ENCODE measurements at regions of chr20 and their contacts with region 1.

Region 1: DNA sequence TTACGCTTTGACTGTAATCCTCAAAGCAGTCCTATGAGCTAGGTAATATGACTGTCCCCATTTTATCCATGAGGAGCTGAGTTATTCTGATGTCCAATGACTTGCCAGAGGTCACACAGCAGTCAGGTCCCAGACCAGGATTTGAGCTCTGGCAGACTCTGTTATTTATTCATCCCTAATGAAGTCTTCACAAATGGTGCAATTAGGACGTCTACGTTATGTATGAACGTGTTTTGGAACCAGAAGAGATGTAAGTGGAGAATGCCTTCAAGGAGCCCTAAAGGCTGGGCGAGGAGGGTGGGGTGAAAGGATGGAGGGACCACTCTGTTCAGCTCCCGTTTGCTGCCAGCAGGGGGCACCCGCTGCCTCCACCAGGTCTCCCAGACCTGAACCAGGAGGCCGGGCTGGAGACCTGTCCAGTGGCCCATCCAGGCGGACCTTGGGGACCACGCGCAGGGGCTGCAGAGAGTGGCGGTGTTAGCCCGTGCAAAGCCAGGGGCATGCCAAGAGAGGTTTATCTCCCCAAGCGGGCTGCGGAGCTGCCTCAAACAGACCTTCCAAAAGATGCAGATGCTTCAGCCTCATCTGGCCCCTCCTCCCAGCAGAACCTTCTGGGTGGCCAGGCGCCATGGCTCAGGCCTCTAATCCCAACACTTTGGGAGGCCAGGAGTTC is 15.2 kb upstream of the ZNF335 start:
- DNase-seq: peak; percentile 35 to 85 (median 70)
- ATAC-seq: peak; percentile 91 to 99 (median 94)
- H3K4me3 ChIP-seq: no peak overlapping the region
- H3K4me3 Mint-ChIP-seq: no peak overlapping the region
- H3K27ac ChIP-seq: no peak overlapping the region
- H3K27ac Mint-ChIP-seq: no peak overlapping the region
- H3K4me1 ChIP-seq: peaks cover 0 to 6% of the 10 kb centered on the region in 2 experiments
- H3K4me1 Mint-ChIP-seq: peaks cover 0 to 4% (median 0%) of the 10 kb centered on the region in 3 donors
- H3K27me3 ChIP-seq: peaks cover 0 to 34% of the 10 kb centered on the region in 2 experiments
- H3K27me3 Mint-ChIP-seq: peaks cover 0 to 6% of the 10 kb centered on the region in 2 donors

Region 2: DNA sequence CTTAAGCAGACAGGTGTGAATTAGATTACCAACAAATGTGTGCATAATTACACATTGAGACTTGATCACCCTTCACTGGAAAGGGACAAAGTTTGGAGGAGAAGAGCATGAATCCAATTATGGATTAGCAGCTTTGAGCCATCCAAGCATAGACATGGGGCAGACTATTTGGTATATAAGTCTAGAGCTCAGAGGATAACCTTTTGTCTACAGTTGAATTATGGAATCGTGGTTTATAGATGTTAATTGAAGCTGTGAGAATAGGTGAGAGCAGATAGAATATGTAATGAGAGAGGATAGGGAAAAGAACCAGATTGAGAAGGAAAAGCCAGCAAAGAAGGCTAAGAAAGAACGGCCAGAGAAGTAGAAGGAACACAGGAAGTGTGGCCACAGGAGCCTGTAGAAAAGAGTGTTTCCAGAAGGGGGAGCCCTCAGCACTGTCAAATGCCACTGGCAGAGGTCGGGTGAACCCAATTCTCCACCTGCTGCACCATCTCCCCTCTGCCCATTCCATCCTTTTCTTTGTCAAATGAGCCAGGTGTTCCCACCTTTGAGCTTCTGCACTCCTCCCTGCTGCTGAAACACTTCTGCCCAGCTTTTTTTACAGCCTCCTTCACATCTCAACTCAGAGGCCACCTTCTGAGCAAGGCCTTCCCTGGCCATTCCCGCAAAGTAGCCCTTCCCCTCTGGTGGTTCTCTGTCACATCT is 188.2 kb before region 1 on chr20:
- CTCF ChIA-PET with region 1: no interaction called
- POLR2A ChIA-PET with region 1: no interaction called
- DNase-seq: peak; percentile 24 to 79 (median 52)
- ATAC-seq: peak; percentile 93 to 98 (median 95)
- H3K4me3 ChIP-seq: no peak overlapping the region
- H3K4me3 Mint-ChIP-seq: no peak overlapping the region
- H3K27ac ChIP-seq: no peak overlapping the region
- H3K27ac Mint-ChIP-seq: peak overlapping the region; percentile 50 to 69
- H3K4me1 ChIP-seq: peaks cover 0 to 9% of the 10 kb centered on the region in 2 experiments
- H3K4me1 Mint-ChIP-seq: peaks cover 10 to 13% (median 10%) of the 10 kb centered on the region in 3 donors
- H3K27me3 ChIP-seq: no peaks in the 10 kb centered on the region
- H3K27me3 Mint-ChIP-seq: no peaks in the 10 kb centered on the region

Region 3: GRCh38 chr20:46013826-46014516 is 26.7 kb after region 1 on chr20:
- CTCF ChIA-PET with region 1: interaction called, 22 to 37 read pairs
- POLR2A ChIA-PET with region 1: interaction called in 1 of 2 experiments, 3 read pairs
- DNase-seq: peak; percentile 26 to 86 (median 60)
- ATAC-seq: peak; percentile 60 to 89 (median 85)
- H3K4me3 ChIP-seq: peak overlapping the region; percentile 29 to 35
- H3K4me3 Mint-ChIP-seq: peak overlapping the region in 2 of 3 donors; percentile 7 to 53
- H3K27ac ChIP-seq: no peak overlapping the region
- H3K27ac Mint-ChIP-seq: peak overlapping the region in 1 of 2 donors; percentile 7
- H3K4me1 ChIP-seq: peaks cover 6 to 53% of the 10 kb centered on the region in 2 experiments
- H3K4me1 Mint-ChIP-seq: peaks cover 42 to 57% (median 45%) of the 10 kb centered on the region in 3 donors
- H3K27me3 ChIP-seq: peaks cover 3 to 59% of the 10 kb centered on the region in 2 experiments
- H3K27me3 Mint-ChIP-seq: peaks cover 60 to 65% of the 10 kb centered on the region in 2 donors

Region 4: DNA sequence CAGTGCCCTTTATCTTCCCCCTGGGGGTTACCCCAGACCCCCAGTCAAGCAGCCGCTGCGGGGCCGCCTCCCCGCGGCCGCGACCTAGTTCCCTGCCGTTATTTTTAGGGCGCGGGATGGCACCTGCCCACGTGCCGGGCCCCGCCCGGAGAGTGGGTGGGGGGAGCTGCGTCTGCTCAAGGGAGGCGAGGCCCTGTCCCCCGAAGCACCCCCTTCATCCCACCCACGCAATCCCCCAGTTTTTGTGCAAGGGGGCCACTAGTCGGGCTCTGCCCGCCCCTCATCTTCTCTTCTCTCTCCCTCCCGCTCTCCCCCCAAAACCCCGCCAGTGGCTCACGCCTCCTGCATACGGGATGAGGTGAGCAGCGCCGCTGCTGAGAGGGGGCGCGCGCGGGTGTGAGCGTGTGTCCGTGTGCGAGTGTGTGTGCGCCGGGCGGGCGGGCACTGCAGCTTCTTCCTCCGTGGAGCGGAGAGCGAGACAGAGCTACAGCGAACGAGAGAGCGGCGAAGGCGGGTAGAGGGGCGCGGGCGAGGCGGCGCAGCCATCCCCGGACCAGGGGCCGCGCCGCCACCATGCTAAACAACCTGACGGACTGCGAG is 41.6 kb after region 1 on chr20 and contains the start of gene SLC12A5:
- CTCF ChIA-PET with region 1: no interaction called
- POLR2A ChIA-PET with region 1: no interaction called
- DNase-seq: no peak
- ATAC-seq: no peak
- H3K4me3 ChIP-seq: no peak within 1 kb of the TSS
- H3K4me3 Mint-ChIP-seq: no peak within 1 kb of the TSS
- H3K27ac ChIP-seq: no peak within 1 kb of the TSS
- H3K27ac Mint-ChIP-seq: peak within 1 kb of the TSS in 1 of 2 donors; percentile 25
- H3K4me1 ChIP-seq: no peaks in the 10 kb centered on the region
- H3K4me1 Mint-ChIP-seq: no peaks in the 10 kb centered on the region
- H3K27me3 ChIP-seq: peaks cover 8 to 82% of the 10 kb centered on the region in 2 experiments
- H3K27me3 Mint-ChIP-seq: peaks cover 49 to 81% of the 10 kb centered on the region in 2 donors
- total RNA-seq, gene SLC12A5: 0.05 TPM in 1 of 5 donors, not detected in the others

Measured in T-cell (primary cell).